Esophagus muscularis mucosa (tissue), 4 donors: ENCODE measurements at regions of chr1 and their contacts with region 1.

Region 1: DNA sequence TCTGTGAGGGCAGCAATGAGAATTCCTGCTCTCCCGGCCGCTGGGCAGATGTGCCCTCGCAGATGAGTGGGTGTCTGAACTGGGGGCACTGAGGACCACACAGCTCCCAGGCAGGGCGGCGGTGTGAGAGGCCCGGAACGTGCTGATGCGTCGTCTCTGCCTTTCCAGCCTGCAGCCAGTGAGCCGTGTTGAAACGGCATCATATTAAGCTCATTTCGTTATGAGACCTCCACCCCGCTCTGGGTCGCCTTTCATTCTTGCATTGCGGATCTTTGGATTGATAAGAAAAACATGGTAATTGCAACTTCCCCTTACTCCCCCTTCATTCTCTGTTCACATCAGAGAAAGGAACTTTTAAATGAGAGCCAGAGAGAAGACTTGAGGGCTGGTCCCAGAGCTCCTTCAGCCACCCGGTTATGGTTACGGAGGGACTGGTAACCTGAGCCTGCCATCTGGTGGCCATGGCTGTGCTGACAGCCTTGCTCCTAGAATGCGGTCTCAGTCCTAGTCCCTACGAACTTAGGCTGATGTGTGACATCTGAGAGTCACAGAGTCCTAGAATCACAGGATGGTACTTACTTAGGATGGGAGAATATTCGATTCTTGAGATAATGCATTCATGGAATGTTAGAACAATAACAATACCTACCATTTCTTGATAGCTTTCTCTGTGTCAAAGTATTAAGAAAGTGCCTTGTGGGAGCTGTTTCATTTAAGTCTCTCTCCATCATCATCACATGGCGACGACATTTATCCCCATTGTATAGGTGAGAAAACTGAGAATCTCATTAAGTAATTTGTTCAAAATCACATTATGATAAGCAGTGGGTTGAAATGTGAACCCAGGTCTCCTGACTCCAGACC is 271.0 kb downstream of the TRABD2B start:
- DNase-seq: no peak
- H3K4me3 ChIP-seq: peak overlapping the region; percentile 22 to 46 (median 36)
- H3K27ac ChIP-seq: no peak overlapping the region
- H3K4me1 ChIP-seq: peaks cover 12 to 22% (median 18%) of the 10 kb centered on the region in 4 donors
- H3K27me3 ChIP-seq: peaks cover 2 to 63% (median 19%) of the 10 kb centered on the region in 4 donors
- CTCF ChIP-seq: peak; percentile 81 to 91 (median 82)
- EP300 ChIP-seq: no peak
- POLR2A ChIP-seq: no peak

Region 2: DNA sequence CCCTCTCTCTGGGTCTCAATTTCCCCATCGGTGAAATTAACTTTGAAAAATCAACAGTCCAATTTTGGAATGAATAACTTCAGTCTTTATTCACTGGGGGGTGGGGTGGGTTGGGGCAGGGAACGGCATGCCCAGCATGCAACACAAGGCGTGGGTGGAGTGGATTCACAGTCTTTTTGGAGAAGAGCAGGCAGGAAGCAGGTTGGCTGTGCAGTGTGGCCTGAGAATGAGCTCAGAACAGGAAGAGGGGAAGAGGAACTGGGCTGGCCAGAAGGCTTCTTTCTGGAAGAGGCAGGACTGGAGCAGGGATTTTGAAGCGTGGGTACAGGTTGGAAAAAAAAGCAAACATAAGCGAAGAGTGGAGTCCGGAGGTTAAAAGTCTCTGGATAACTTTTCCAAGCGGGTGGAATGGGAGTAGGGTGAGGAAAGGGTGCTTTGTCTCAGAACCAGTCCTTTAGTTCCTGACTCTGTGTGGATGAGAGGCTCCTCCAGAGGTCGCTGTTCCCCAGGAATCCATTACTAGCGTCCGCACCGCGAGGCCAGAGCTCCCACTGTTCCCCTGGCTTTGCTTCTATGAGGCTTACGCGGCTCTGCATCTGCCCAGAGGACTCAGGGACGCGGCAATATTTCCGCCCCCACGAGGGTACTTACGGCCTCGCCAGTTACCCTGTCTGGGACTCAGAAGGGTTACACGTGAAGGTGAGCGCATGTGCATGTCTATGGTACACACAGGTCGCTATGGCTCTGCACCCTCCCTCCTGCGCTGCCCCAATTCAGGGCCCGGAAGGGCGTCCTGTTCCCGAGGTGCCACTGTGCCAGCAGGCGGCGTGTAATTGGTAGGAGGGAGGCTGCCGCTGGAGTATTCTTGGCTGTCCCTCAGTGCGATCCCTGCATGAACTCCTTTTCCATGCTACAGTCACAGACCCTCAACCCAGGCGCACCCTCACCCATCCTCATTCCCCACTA is 293.9 kb before region 1 on chr1:
- intact Hi-C with region 1: loop called (anchors 5 kb)
- DNase-seq: no peak
- H3K4me3 ChIP-seq: peak overlapping the region in 2 of 4 donors; percentile 0 to 1
- H3K27ac ChIP-seq: no peak overlapping the region
- H3K4me1 ChIP-seq: peaks cover 40 to 55% (median 51%) of the 10 kb centered on the region in 4 donors
- H3K27me3 ChIP-seq: peaks cover 7 to 100% (median 70%) of the 10 kb centered on the region in 4 donors
- CTCF ChIP-seq: peak; percentile 65 to 72 (median 68)
- EP300 ChIP-seq: no peak
- POLR2A ChIP-seq: no peak